ENCODE measurements at regions of chr12 and their contacts with region 1.

Region 1: DNA sequence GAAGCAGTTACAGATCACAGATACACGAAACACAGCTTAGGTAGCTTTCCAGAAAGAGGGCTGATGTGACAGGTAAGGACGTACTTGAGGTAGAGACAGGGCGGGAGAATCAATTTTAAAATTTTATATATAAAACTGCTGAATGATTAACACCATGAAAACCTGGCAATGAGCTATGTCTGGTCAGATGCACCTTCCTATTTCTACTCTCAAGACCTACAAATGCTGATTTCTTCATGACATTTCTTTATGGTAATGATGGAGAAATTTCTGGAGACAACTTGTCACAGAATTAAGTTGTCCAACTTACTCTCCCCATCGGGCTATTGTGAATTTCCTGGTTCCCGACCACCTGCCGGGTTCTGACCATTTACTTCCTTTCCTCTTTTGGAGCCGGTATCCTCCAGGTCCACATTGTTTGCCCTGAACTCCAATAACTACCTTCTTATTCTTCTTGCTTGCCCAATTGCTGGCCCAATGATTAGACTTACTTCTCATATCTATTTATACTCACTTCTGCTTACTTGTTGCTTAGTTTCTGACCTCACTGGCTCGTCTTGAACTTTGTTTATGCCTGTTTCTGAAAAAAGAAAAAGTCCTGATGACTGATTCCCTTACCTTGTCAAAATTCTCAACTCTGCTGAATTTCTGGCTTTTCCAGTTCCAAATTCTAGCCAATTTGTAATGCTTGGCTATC is 12.8 kb upstream of the ATP2B1 start:
- DNase-seq: no peak

Region 2: GRCh38 chr12:88325076-88325815 is 1396.2 kb before region 1 on chr12:
- intact Hi-C with region 1: no loop called
- DNase-seq: peak; percentile 42

Region 3: DNA sequence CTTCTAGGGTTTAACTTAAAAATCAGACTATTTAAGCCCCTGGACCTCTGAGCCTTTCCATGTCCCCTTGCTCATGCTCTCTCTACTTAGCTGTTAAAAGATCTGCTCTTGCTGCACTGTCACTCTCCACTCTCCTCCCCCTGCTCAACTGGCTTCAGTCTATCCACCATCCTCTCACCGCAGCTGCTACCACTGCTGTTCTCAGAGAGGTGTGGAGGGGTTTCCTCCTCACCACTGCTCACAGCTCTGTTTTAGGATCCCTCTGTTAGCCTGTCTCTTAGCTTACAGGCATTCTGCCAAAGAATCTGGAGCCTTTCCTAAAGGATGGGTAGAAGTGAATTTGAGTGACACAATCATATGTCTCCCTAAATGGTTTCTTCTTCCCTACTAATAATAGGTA is 30.9 kb after region 1 on chr12:
- intact Hi-C with region 1: loop called in 1 of 2 experiments (anchors 1 kb)
- DNase-seq: no peak